ENCODE measurements at regions of chr19 and their contacts with region 1.

Region 1: DNA sequence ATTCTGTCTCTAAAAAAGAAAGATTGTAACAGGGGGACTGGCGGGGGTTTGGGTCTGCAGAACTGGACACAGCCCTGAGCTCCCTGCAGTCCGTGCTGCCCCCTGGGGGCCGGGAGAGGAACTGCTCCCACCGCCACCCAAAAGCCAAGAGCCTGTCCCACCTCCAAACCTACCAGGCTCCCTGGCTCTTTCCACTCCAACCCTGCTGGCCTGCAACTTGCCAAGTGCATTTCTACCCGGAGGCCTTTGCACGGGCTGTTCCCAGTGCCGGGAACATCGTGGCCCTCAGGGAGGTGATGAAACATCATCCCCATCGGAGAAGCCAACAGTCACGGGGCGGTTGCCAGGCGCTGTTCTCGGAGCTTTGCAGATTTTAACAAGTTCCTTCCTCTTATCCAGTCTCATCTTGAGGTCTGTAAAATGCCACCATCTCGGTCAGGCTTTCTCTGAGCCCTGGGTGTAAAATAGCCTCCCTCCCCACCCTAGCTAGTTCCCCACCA is 50.7 kb downstream of the SMIM24 start:
- DNase-seq: peak; percentile 98 to 100
- ATAC-seq: peak; percentile 88 to 91
- H3K4me3 ChIP-seq: peak overlapping the region in 2 of 4 donors; percentile 1 to 12
- H3K27ac ChIP-seq: peak overlapping the region; percentile 85 to 98 (median 95)
- H3K4me1 ChIP-seq: peaks cover 43 to 50% of the 10 kb centered on the region in 2 donors
- H3K27me3 ChIP-seq: no peaks in the 10 kb centered on the region
- CTCF ChIP-seq: peak; percentile 99 to 100 (median 100)
- POLR2A ChIP-seq: peak; percentile 34 to 61

Region 2: DNA sequence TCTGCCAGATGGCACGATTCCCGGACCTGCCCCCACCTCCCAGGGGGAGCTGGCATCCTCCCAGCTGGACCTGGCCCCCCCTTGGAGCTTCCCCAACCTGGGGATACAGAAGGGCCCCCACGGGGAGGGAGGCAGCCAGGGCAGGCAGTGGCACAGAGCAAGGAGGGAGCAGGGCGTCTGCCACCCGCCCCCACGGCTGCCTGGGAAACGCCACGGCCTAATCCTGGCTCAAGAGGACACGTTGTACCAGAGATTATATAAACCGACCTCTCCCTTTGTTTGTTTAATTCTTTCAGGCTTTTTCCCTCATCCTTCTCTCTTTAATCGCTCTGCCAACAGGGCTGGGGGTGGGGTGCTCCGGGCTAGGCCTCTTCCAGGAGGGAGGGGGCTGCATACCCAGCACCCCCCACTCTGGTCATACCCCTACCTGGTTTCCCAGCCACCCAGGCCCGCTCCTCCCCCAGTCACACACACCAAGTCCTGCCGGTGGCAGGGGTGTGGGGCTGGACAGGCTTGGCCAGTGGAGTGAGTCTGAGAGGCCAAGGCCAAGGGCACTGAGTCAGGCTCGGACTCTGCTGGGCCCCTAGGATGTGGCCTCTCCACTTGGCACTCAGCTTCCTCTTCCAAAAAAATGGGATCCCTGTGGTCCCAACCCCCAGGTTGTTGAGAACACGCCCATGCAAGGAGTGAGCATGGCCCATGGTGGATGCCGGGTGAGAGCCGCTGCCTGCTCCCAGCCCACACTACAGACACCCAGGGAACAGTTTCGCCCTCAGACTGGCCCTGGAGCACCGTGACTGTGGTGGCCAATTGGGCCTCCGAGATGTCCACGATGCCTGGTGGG is 92.7 kb before region 1 on chr19:
- in situ Hi-C with region 1: loop called in 2 of 4 experiments (anchors 5 to 10 kb)
- intact Hi-C with region 1: loop called (anchors 2 kb)
- DNase-seq: peak; percentile 84 to 94
- ATAC-seq: peak; percentile 85 to 86
- H3K4me3 ChIP-seq: peak overlapping the region in 2 of 4 donors; percentile 1 to 25
- H3K27ac ChIP-seq: peak overlapping the region; percentile 92 to 97 (median 95)
- H3K4me1 ChIP-seq: peaks cover 38 to 39% of the 10 kb centered on the region in 2 donors
- H3K27me3 ChIP-seq: no peaks in the 10 kb centered on the region
- CTCF ChIP-seq: no peak
- POLR2A ChIP-seq: peak; percentile 14 to 43

Region 3: GRCh38 chr19:3360421-3361383 is 68.9 kb before region 1 on chr19:
- in situ Hi-C with region 1: no loop called
- intact Hi-C with region 1: loop called (anchors 2 kb)
- DNase-seq: peak; percentile 75 to 86
- ATAC-seq: peak; percentile 50 to 52
- H3K4me3 ChIP-seq: peak overlapping the region; percentile 71 to 90 (median 84)
- H3K27ac ChIP-seq: peak overlapping the region; percentile 92 to 99 (median 98)
- H3K4me1 ChIP-seq: peaks cover 27 to 28% of the 10 kb centered on the region in 2 donors
- H3K27me3 ChIP-seq: no peaks in the 10 kb centered on the region
- CTCF ChIP-seq: peak in 3 of 5 experiments; percentile 27 to 40 (median 36)
- POLR2A ChIP-seq: peak; percentile 84 to 90

Region 4: DNA sequence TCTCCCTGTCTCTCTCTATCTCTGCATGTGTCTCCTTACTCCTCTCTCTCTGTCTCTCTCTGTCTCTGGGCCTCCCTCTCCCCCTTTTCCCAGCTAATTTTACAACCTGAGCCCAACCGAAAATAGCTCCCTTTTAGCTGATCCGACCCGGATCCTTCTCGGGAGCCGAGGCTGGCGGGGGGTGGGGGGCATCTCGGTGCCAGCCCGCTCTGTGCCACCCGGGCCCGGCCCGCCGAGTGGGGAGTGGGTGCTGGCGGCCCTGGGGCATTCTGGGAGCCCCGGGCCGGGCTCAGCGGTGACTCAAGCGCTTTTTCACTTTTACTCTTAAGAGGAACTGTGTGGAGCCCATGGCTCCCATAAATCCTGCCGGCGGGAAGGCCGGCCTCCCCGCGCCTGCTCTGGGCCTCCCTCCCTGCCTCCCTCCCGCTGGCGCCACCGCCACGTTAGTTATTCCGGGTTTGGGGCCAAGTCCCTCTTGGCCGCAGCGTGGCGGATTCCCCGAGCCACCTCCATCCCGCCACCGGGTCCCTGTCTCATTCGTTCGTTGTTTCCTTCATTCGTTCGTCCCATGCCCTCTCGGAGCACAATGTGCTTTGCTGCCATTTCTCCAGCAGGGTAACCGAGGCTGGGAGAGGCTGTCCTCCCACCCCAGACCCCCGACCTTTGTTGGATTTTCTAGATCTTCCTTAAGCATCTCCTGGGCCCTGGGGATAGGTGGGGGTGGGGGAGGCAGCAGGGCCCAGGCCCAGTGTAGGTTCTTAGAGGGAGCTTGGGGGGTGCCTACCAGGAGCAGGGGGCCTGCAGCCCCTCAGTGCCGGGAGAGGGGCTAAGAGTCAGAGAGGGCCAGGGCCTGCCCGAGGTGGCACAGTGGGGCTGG is 60.1 kb before region 1 on chr19:
- in situ Hi-C with region 1: loop called in 2 of 4 experiments (anchors 10 kb)
- intact Hi-C with region 1: loop called (anchors 2 kb)
- DNase-seq: peak; percentile 67 to 83
- ATAC-seq: peak; percentile 5 to 18
- H3K4me3 ChIP-seq: peak overlapping the region; percentile 87 to 99 (median 96)
- H3K27ac ChIP-seq: peak overlapping the region; percentile 98 to 100 (median 98)
- H3K4me1 ChIP-seq: peaks cover 44 to 57% of the 10 kb centered on the region in 2 donors
- H3K27me3 ChIP-seq: no peaks in the 10 kb centered on the region
- CTCF ChIP-seq: peak in 1 of 5 experiments; percentile 13
- POLR2A ChIP-seq: peak; percentile 85 to 93

Region 5: GRCh38 chr19:3375221-3376090 is 54.2 kb before region 1 on chr19:
- in situ Hi-C with region 1: loop called in 2 of 4 experiments (anchors 10 kb)
- intact Hi-C with region 1: loop called (anchors 2 kb)
- DNase-seq: peak; percentile 99
- ATAC-seq: peak; percentile 68 to 72
- H3K4me3 ChIP-seq: peak overlapping the region; percentile 32 to 56 (median 45)
- H3K27ac ChIP-seq: peak overlapping the region; percentile 98 to 100 (median 98)
- H3K4me1 ChIP-seq: peaks cover 54 to 64% of the 10 kb centered on the region in 2 donors
- H3K27me3 ChIP-seq: no peaks in the 10 kb centered on the region
- CTCF ChIP-seq: no peak
- POLR2A ChIP-seq: peak; percentile 66 to 75

Region 6: GRCh38 chr19:3409346-3410064 is 20.1 kb before region 1 on chr19:
- in situ Hi-C with region 1: no loop called
- intact Hi-C with region 1: loop called (anchors 1 kb)
- DNase-seq: peak; percentile 99 to 100
- ATAC-seq: peak; percentile 73 to 74
- H3K4me3 ChIP-seq: peak overlapping the region; percentile 53 to 73 (median 58)
- H3K27ac ChIP-seq: peak overlapping the region; percentile 98 to 100 (median 98)
- H3K4me1 ChIP-seq: peaks cover 69 to 86% of the 10 kb centered on the region in 2 donors
- H3K27me3 ChIP-seq: no peaks in the 10 kb centered on the region
- CTCF ChIP-seq: no peak
- POLR2A ChIP-seq: peak; percentile 88 to 92

Region 7: GRCh38 chr19:3450796-3451411 is 21.3 kb after region 1 on chr19:
- in situ Hi-C with region 1: no loop called
- intact Hi-C with region 1: loop called (anchors 1 kb)
- DNase-seq: peak; percentile 80 to 93
- ATAC-seq: peak; percentile 87 to 92
- H3K4me3 ChIP-seq: no peak overlapping the region
- H3K27ac ChIP-seq: peak overlapping the region; percentile 88 to 91 (median 89)
- H3K4me1 ChIP-seq: peaks cover 5 to 13% of the 10 kb centered on the region in 2 donors
- H3K27me3 ChIP-seq: no peaks in the 10 kb centered on the region
- CTCF ChIP-seq: no peak
- POLR2A ChIP-seq: peak in 1 of 2 donors; percentile 47

Measured in gastrocnemius medialis (tissue), 4 donors.